Activated CD4-positive, alpha-beta T cell treated with anti-CD3 and anti-CD28 coated beads for 36 hours (primary cell): ENCODE measurements at regions of chr1 and their contacts with region 1.

Region 1: GRCh38 chr1:38012363-38013226 is at the start of gene UTP11:
- DNase-seq: peak; percentile 94
- ATAC-seq: peak; percentile 81
- H3K4me3 Mint-ChIP-seq: peak within 1 kb of the TSS; percentile 97
- H3K27ac Mint-ChIP-seq: peak within 1 kb of the TSS; percentile 95
- H3K4me1 Mint-ChIP-seq: peaks cover 51% of the 10 kb centered on the region
- H3K27me3 Mint-ChIP-seq: no peaks in the 10 kb centered on the region
- total RNA-seq, gene UTP11: 68.9 to 82.4 TPM

Region 2: GRCh38 chr1:36463803-36464604 is 1548.6 kb before region 1 on chr1 and contains the start of gene MRPS15:
- CTCF ChIA-PET with region 1: no interaction called
- POLR2A ChIA-PET with region 1: no interaction called
- intact Hi-C with region 1: loop called in 1 of 2 experiments (anchors 5 kb)
- DNase-seq: peak; percentile 98
- ATAC-seq: peak; percentile 94
- H3K4me3 Mint-ChIP-seq: peak within 1 kb of the TSS; percentile 97
- H3K27ac Mint-ChIP-seq: peak within 1 kb of the TSS; percentile 97
- H3K4me1 Mint-ChIP-seq: peaks cover 31% of the 10 kb centered on the region
- H3K27me3 Mint-ChIP-seq: no peaks in the 10 kb centered on the region
- total RNA-seq, gene MRPS15: 123 to 169 TPM

Region 3: GRCh38 chr1:37514350-37515184 is 498.0 kb before region 1 on chr1 and contains the start of gene MEAF6:
- CTCF ChIA-PET with region 1: no interaction called
- POLR2A ChIA-PET with region 1: no interaction called
- intact Hi-C with region 1: loop called in 1 of 2 experiments (anchors 2 kb)
- DNase-seq: peak; percentile 91
- ATAC-seq: peak; percentile 88
- H3K4me3 Mint-ChIP-seq: peak within 1 kb of the TSS; percentile 87
- H3K27ac Mint-ChIP-seq: peak within 1 kb of the TSS; percentile 93
- H3K4me1 Mint-ChIP-seq: peaks cover 41% of the 10 kb centered on the region
- H3K27me3 Mint-ChIP-seq: no peaks in the 10 kb centered on the region
- total RNA-seq, gene MEAF6: 66.8 to 72.2 TPM

Region 4: DNA sequence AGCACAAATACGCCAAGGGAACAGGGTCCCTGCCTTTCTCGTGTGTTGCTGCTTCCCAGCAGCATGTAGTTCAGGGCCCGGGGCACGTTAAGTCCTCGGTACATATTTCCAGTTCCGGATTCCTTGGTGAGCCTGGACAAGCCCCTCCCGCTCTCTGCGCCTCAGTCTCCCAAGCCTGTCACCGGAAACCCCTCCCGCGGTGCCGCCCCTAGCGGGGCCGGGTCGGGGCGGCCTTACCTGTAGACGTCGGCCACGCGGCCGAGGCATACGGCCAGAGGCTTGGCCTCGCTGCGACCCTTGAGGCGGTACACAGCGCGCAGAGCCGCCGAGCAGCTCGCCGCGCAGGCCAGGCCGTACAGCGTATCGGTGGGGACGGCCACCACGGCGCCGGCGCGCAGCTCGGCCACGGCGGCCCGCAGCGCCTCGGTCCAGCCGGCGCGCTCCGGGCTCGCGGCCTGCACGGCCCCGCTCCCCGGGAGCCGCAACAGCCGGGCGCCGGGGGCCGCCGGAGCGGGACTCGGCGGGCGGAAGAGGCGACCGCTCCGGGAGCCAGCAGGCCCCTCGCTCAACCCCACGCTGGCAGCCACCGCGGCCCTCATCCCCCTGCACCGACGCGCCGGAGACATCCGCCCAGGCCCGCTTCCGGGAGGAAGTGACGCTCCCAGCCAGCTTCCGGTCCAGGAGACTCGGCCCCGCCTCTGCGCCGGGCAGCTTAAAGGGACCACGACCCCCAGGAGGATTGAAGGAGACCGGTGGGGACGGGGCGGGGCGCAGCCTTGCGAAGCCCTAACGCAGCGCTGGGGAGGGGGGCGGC is 204.8 kb before region 1 on chr1 and contains the starts of genes C1orf122 and YRDC:
- CTCF ChIA-PET with region 1: no interaction called
- POLR2A ChIA-PET with region 1: no interaction called
- intact Hi-C with region 1: loop called in 1 of 2 experiments (anchors 1 kb)
- DNase-seq: peak; percentile 95
- ATAC-seq: peak; percentile 92
- H3K4me3 Mint-ChIP-seq: peak within 1 kb of the TSS; percentile 90
- H3K27ac Mint-ChIP-seq: peak within 1 kb of the TSS; percentile 93
- H3K4me1 Mint-ChIP-seq: peaks cover 34% of the 10 kb centered on the region
- H3K27me3 Mint-ChIP-seq: no peaks in the 10 kb centered on the region
- total RNA-seq, gene C1orf122: 10.8 to 17.9 TPM
- total RNA-seq, gene YRDC: 22.9 to 36.3 TPM

Region 5: GRCh38 chr1:37890378-37891014 is 122.1 kb before region 1 on chr1:
- CTCF ChIA-PET with region 1: no interaction called
- POLR2A ChIA-PET with region 1: no interaction called
- intact Hi-C with region 1: no loop called
- DNase-seq: no peak
- ATAC-seq: no peak
- H3K4me3 Mint-ChIP-seq: no peak overlapping the region
- H3K27ac Mint-ChIP-seq: no peak overlapping the region
- H3K4me1 Mint-ChIP-seq: no peaks in the 10 kb centered on the region
- H3K27me3 Mint-ChIP-seq: no peaks in the 10 kb centered on the region

Region 6: DNA sequence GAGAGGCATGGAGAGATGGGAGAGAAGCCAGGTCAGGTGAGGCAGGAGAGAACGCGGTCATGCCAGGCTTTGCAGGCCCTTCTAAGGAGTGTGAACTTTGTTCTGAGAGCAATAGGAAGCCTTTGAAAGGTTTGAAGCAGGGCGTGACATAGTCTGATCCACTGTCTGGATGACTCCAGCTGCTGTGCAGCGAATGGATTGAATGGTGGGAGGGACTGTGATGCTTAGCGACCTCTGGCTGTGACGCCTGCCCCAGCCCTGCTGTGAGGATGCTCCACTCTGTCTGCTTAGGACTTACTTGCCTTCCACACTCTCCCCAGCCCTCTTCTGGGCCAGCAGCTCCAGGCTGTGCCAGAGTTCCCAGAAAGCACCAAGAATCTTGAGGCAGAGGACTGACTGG is 75.8 kb after region 1 on chr1:
- CTCF ChIA-PET with region 1: no interaction called
- POLR2A ChIA-PET with region 1: no interaction called
- intact Hi-C with region 1: no loop called
- DNase-seq: no peak
- ATAC-seq: no peak
- H3K4me3 Mint-ChIP-seq: no peak overlapping the region
- H3K27ac Mint-ChIP-seq: no peak overlapping the region
- H3K4me1 Mint-ChIP-seq: no peaks in the 10 kb centered on the region
- H3K27me3 Mint-ChIP-seq: peaks cover 24% of the 10 kb centered on the region

Region 7: DNA sequence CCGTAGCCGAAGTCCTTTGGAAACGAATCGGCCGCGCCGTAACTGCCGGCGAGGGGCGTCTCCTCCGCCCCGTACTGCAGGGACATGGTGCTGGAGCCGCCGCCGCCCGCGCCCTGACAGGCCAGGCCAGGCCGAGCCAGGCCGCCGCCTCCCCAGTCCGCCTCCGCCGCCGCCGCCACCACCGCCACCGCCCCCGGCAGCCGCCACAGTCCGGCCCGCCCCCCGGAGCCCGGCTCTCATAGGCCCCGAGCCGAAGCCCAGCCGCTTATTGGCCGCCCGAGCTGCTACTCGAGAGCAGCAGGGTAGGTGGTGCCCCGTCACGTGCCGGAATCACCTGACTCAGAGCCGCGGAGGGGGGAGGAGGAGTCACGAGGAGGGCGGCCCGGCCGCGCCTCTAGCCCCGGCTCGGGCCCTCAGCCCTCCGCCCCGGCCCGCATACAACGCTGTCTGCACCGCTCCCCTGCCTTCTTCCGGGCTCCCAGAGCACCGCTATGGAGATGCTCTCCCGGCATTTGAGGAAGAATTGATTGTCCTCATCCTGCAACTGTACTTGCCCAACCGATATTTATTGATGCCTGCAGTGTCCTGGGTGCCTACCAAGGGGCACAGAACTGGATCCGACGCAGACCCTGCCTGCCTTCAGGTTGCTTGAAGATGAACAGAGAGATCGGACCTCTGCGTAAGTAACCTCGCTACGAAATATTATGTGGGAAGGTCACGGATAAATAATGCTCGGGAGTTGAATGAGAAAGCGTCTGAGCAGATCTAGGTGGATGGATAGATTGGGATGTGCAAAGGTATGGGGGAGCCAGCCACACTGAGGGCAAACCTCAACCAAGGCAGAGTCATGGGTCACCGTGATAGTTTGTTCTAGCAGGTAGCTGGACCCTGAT is 847.2 kb after region 1 on chr1 and contains the start of gene RRAGC:
- CTCF ChIA-PET with region 1: no interaction called
- POLR2A ChIA-PET with region 1: no interaction called
- intact Hi-C with region 1: loop called in 1 of 2 experiments (anchors 1 kb)
- DNase-seq: peak; percentile 99
- ATAC-seq: peak; percentile 98
- H3K4me3 Mint-ChIP-seq: peak within 1 kb of the TSS; percentile 98
- H3K27ac Mint-ChIP-seq: peak within 1 kb of the TSS; percentile 91
- H3K4me1 Mint-ChIP-seq: peaks cover 58% of the 10 kb centered on the region
- H3K27me3 Mint-ChIP-seq: no peaks in the 10 kb centered on the region
- total RNA-seq, gene RRAGC: 15.8 to 19.0 TPM

Region 8: GRCh38 chr1:38873027-38873969 is 860.7 kb after region 1 on chr1 and contains the start of gene MYCBP:
- CTCF ChIA-PET with region 1: no interaction called
- POLR2A ChIA-PET with region 1: no interaction called
- intact Hi-C with region 1: loop called in 1 of 2 experiments (anchors 1 kb)
- DNase-seq: peak; percentile 97
- ATAC-seq: peak; percentile 99
- H3K4me3 Mint-ChIP-seq: peak within 1 kb of the TSS; percentile 92
- H3K27ac Mint-ChIP-seq: peak within 1 kb of the TSS; percentile 83
- H3K4me1 Mint-ChIP-seq: peaks cover 26% of the 10 kb centered on the region
- H3K27me3 Mint-ChIP-seq: no peaks in the 10 kb centered on the region
- total RNA-seq, gene MYCBP: 44.4 to 46.8 TPM